ENCODE measurements at regions of chr1 and their contacts with region 1.

Region 1: GRCh38 chr1:231091831-231092301 is 51.8 kb upstream of the FAM89A start:
- DNase-seq: no peak
- ATAC-seq: no peak

Region 2: GRCh38 chr1:230917284-230918135 is 174.4 kb before region 1 on chr1:
- intact Hi-C with region 1: loop called (anchors 10 kb)
- DNase-seq: peak; percentile 67
- ATAC-seq: peak; percentile 86

Region 3: DNA sequence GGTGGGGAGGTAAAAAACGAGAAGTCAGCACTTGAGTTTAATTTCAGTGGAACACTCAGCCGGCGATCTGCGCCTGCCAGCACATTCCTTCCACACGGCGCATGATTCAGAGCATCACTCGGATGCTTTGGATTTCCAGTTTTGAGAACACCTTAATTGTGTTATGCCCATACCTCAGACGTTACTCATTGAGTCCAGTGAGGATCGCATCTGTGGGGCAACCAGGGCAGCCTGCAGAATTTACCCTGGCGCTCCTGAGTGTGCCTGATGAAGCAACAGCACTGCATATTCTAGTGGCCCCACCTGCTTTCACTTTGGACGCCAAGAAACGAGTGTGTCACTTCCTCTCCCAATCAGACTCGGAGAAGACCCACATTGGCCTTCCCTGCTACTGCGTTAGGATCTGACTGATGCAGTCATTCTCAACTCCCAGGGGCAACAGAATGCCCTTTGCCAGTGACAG is 71.7 kb before region 1 on chr1:
- intact Hi-C with region 1: loop called (anchors 2 kb)
- DNase-seq: no peak
- ATAC-seq: no peak

Region 4: GRCh38 chr1:231040019-231040799 is 51.7 kb before region 1 on chr1 and contains the start of gene FAM89A:
- intact Hi-C with region 1: loop called (anchors 5 kb)
- DNase-seq: no peak
- ATAC-seq: peak; percentile 69
- total RNA-seq, gene FAM89A: 8.9 TPM